ENCODE measurements at regions of chr10 and their contacts with region 1.

Region 1: DNA sequence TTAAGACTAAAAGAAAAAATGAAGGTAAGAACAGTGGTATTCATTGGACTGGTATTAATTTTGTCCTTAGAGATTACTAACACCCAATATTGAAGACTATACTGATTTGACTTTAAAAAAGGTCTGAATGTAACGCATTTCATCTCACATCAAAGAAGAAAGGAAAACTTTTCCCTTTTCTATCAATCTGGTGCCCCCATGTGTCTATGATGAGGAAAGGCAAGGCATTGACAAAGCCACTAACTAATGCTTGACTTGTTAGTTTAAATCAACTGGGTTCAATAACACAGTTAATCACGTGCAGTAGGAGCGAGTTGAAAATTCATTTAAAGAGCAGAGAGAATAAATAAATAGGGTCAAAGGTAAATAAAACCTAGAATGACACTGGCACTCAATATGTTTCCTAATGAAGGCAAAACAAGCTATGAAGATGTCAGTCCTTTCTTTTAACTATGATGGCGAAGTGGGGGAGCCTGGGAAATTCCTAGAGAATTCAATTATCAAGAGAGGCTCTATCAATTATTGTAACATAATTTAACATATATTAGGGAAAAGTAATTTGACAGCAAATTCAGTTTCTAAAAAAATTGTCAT is 180.9 kb downstream of the ANK3 start:
- DNase-seq: peak; percentile 19
- H3K4me3 Mint-ChIP-seq: no peak overlapping the region
- H3K27ac Mint-ChIP-seq: no peak overlapping the region
- H3K4me1 Mint-ChIP-seq: peaks cover 11% of the 10 kb centered on the region
- H3K27me3 Mint-ChIP-seq: no peaks in the 10 kb centered on the region
- CTCF ChIP-seq: peak; percentile 85

Region 2: DNA sequence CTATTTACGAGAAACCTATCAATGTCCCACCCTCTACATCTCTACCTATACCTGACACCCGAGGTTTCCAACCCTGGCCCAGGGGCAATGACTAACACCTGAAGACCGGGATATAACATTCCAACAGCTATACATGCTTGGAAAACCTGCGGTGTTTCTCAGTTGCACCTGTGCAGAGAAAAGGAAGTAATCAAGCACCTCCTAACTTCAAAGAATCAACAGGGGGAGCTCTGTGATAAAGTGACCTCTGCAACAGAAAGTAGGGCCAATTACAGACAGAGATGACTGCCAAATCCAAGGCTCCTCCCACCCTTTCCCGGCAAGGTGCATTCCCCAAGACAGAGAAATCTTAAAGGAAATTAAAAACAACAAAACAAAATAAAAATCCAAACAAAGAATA is 343.7 kb before region 1 on chr10:
- CTCF ChIA-PET with region 1: no interaction called
- intact Hi-C with region 1: no loop called
- DNase-seq: peak; percentile 71
- H3K4me3 Mint-ChIP-seq: peak overlapping the region; percentile 33
- H3K27ac Mint-ChIP-seq: peak overlapping the region; percentile 21
- H3K4me1 Mint-ChIP-seq: peaks cover 63% of the 10 kb centered on the region
- H3K27me3 Mint-ChIP-seq: no peaks in the 10 kb centered on the region
- CTCF ChIP-seq: peak; percentile 72

Region 3: DNA sequence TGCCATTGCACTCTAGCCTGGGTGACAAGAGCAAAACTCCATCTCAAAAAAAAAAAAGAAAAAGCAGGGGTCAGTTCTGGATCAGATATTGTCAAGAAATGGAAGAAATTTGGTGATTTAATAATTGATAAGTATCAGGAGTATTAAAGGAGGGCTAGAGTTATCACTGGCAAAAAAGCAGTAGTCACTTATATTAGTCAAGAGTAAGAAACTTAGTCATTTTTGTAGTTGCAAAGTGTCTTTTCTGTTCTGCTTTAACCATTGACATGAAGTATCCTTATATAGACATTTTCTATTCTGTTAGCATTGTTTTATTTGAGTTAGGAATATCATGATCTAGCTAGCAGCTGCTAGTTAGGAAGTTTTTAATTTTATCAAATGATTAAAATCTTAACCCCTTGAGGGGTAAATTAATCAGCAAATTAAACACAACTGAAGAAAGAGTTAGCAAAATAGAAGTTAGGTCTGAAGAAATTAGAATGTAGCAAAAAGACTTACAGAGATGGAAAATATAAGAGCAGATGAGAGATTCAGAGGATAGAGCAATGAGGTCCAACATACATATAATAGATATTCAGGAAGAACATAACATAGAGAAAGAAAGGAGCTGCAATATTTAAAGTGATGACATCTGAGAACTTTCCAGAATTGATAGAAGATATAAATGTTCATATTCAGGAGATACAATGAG is 295.1 kb before region 1 on chr10:
- CTCF ChIA-PET with region 1: no interaction called
- intact Hi-C with region 1: no loop called
- DNase-seq: no peak
- H3K4me3 Mint-ChIP-seq: no peak overlapping the region
- H3K27ac Mint-ChIP-seq: no peak overlapping the region
- H3K4me1 Mint-ChIP-seq: peaks cover 3% of the 10 kb centered on the region
- H3K27me3 Mint-ChIP-seq: no peaks in the 10 kb centered on the region
- CTCF ChIP-seq: no peak

Region 4: DNA sequence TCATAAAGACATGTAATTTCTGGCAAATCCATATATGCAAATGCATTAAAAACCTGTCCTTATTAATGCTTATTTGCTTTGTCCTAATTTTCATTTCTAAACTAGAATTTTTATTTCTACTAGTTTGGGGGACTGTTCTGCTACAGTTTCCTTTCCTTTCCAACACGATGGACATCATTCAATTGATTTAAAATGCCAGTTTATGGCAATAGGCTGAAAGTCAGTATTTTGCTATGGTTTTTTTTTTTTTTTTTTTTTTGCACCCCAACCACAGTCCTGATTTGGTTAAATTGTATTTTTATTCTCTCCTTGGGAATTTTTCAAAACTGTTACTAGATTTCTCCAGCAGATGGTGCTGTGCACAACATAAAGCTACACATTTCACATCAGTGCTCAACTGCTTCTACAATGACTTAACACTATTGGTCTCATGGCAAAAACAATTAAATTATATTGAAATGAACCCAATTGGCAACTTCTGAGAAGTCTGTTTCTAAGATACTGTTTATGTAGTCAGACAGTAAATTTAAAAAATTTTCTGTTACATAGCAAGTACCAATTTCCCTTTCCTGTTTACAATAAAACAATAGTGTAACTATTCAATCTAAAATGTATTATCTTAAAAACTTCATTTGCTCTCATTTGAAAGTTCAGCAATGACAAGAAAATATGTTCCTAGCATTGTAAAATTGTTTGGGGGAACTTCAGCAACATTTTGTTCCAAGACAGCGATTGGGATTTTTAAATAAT is 108.6 kb before region 1 on chr10:
- CTCF ChIA-PET with region 1: interaction called, 30 read pairs
- intact Hi-C with region 1: loop called (anchors 1 kb)
- DNase-seq: peak; percentile 39
- H3K4me3 Mint-ChIP-seq: no peak overlapping the region
- H3K27ac Mint-ChIP-seq: no peak overlapping the region
- H3K4me1 Mint-ChIP-seq: peaks cover 31% of the 10 kb centered on the region
- H3K27me3 Mint-ChIP-seq: no peaks in the 10 kb centered on the region
- CTCF ChIP-seq: peak; percentile 41

Region 5: GRCh38 chr10:60114765-60115586 is 93.8 kb before region 1 on chr10:
- CTCF ChIA-PET with region 1: interaction called, 13 read pairs
- intact Hi-C with region 1: loop called (anchors 1 kb)
- DNase-seq: peak; percentile 55
- H3K4me3 Mint-ChIP-seq: no peak overlapping the region
- H3K27ac Mint-ChIP-seq: no peak overlapping the region
- H3K4me1 Mint-ChIP-seq: no peaks in the 10 kb centered on the region
- H3K27me3 Mint-ChIP-seq: no peaks in the 10 kb centered on the region
- CTCF ChIP-seq: peak; percentile 79

Region 6: GRCh38 chr10:60343254-60343653 is 134.5 kb after region 1 on chr10:
- CTCF ChIA-PET with region 1: no interaction called
- intact Hi-C with region 1: no loop called
- DNase-seq: no peak
- H3K4me3 Mint-ChIP-seq: no peak overlapping the region
- H3K27ac Mint-ChIP-seq: no peak overlapping the region
- H3K4me1 Mint-ChIP-seq: no peaks in the 10 kb centered on the region
- H3K27me3 Mint-ChIP-seq: no peaks in the 10 kb centered on the region
- CTCF ChIP-seq: no peak

Measured in Calu3 (cell line).